ENCODE measurements at regions of chr18 and their contacts with region 1.

Region 1: DNA sequence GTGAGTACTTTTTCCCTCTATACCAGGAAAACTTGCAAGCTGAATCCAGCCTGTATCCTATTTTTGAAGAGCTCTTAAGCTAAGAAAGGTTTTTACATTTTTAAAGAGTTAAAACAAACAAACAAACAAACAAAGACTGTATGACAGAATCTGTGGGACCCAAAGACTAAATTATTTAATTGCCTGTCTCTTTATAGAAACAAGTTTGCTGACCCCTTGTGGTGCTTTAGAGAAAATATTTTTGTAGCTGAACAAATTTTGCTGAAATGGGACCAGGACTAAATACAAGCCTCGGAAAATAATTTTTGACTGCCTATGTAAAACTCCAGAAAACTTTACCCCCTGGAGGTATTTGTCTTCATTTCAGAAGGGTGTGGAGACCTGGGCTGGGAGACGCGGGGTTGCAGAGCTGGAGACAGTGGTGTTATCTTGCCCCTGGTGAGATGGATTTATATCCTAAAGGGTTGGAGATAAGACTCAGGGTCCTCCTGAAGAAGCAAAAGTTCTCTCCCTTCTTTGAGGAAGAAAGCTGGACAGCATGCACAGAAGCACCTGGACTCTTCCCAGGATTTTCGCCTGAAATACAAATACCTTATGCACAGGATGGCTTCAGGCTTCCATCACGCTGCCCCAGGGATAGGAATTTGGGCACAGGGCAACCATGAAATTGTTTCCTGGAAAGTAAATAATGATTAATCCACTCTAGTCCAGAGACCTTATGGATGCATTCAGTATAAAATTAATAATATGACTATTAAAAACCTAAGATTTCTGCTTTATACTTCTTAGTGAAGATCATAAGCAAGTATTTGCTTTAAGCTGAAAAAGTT is 54.3 kb downstream of the TMX3 start:
- ATAC-seq: peak in 2 of 8 experiments; percentile 32 to 48
- H3K4me3 ChIP-seq: no peak overlapping the region
- H3K27ac ChIP-seq: no peak overlapping the region
- H3K4me1 ChIP-seq: peaks cover 0 to 4% of the 10 kb centered on the region in 2 donors

Region 2: DNA sequence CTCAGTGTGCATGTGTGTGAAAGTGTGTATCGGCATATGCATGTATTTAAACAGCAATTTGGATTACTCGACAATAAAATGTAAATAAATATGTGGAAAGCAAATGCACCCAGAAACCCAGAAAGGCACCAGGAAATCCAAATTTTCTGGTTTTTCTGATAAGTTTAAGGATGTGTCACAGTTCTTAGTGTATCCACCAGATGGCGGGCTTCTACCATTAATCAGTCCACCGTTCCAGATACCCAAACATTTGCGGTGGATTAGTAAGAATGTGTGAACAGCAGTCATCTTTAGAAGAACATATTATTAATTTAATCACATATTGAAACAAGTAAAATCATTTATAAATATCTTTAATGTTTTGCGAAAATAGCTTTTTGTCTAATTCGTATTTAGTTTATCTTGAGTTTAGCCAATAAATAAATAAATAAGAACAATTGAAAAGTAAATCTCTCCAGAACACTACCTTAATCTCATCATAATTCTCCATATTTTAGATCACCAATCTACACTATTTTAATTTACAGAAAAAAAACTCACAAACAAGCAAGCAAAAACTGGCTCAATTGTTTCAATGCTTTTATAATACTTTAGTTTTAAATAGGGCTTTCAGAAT is 1442.9 kb before region 1 on chr18:
- in situ Hi-C with region 1: loop called in 5 of 9 experiments (anchors 25 kb)
- ATAC-seq: peak; percentile 50 to 74 (median 61)
- H3K4me3 ChIP-seq: no peak overlapping the region
- H3K27ac ChIP-seq: no peak overlapping the region
- H3K4me1 ChIP-seq: no peaks in the 10 kb centered on the region

Region 3: DNA sequence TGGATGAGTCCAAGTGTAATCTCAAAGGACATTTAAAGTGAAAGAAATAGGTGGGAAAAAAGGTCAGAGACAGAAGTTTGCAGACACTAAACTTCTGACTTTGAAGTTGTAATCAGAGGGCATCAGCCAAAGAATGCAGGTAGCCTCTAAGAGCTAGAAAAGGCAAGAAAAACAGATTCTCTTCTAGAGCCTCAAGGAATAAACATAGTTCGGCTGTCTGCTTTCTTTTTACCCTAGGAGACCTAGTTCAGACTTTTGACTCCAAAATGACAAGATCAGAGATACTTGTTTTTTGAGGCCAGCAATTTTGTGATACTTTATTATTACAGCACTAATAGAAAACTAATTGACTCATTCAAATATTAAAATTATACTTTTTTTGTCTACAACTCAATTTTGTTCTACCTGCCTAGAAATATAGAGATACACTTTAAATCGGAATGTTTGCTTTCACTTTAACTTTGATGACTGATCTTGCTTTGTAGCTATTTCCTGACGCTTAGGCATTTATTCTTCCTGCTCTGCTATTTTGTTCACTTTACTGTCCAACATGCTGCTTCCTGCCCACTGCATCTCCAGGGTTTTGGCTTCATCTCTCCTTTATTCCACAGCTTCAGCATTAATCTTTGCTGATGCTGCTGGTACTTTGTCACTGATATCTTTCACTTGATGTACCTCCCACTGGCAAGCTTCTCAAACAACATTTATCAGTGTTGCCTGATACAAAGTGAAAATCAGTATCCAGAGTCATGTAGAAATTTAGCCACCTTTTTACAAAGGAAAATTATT is 1416.6 kb before region 1 on chr18:
- in situ Hi-C with region 1: loop called in 1 of 9 experiments (anchors 25 kb)
- ATAC-seq: peak in 1 of 8 experiments; percentile 29
- H3K4me3 ChIP-seq: no peak overlapping the region
- H3K27ac ChIP-seq: no peak overlapping the region
- H3K4me1 ChIP-seq: peaks cover 0 to 10% of the 10 kb centered on the region in 2 donors

Region 4: DNA sequence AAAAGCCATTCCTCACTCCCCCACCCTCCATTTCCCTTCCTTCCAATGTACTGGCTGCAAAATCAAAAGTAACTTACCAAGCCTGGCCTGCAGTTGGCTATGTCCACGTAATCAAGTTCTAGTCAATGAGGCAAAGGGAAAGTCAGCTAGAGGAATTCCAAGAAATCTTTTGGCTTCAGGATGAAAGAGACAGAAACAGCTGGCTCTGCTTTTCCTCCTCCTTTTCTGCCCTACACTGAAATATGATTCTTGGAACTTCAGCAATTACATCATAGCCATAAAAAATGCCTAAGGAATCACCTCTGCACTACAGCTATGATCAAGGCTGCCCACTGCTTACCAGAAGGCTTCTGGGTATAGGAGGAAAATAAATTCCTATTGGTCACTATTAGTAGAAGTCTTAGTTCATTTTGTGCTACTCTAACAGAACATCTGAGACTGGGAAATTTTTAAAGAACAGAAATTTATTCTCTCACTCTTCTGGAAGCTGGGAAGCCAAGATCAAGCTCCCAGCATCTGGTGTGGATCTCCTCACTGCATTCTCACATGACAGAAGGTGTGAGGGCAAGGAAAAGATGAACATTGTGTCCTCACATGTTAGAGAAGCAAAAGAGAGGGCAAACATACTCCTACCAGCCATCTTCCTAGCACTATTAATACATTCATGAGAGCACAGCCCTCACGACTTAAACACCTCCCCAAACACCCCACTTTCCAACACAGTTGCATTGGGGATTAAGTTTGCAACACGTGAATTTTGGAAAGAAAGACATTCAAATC is 165.6 kb before region 1 on chr18:
- in situ Hi-C with region 1: no loop called
- ATAC-seq: peak; percentile 60 to 96 (median 72)
- H3K4me3 ChIP-seq: no peak overlapping the region
- H3K27ac ChIP-seq: no peak overlapping the region
- H3K4me1 ChIP-seq: no peaks in the 10 kb centered on the region